Transverse colon (tissue), 4 donors: ENCODE measurements at regions of chr6 and their contacts with region 1.

Region 1: DNA sequence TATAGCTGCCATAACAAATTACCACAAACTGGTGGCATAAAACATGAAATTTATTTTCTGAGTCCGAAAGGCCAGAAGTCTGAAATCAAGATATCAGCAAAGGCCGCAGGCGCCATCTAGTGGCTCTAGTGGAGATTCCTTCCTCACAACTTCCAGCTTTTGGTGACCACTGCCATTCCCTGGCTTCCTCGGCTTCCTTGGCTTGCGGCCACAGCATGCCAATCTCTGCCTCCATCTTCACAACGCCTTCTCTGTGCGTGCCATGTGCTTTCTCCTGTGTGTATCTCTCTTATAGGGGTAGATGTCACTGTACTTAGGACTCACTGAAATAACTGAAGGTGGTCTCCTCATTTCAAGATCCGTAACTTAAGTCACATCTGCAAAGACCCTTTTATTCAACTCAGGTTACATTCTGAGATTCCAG is 5.4 kb upstream of the PLAGL1 start:
- DNase-seq: peak; percentile 83
- H3K4me3 ChIP-seq: no peak overlapping the region
- H3K27ac ChIP-seq: no peak overlapping the region
- H3K4me1 ChIP-seq: peaks cover 0 to 11% (median 5%) of the 10 kb centered on the region in 4 donors
- H3K27me3 ChIP-seq: no peaks in the 10 kb centered on the region
- CTCF ChIP-seq: peak; percentile 89 to 97 (median 90)
- EP300 ChIP-seq: no peak
- POLR2A ChIP-seq: no peak

Region 2: DNA sequence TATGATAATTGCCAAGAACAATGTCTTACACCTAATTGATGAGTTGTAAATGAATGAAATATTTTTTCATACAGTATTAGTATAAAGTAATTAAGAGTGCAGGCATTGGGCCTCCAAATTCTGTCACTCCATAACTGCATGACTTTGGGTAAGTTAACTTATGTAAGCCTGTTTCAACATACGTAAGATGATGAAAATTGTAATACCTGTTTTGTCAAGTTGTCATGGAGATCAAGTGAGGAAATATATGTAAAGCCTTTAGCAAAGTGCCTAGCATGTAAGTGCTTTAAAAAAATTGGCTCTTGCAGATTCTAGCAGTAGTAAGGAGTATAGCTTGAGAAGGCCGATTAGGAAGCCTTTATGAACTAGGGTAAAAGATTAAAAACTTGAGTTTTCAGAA is 1836.3 kb before region 1 on chr6:
- in situ Hi-C with region 1: no loop called
- intact Hi-C with region 1: no loop called
- DNase-seq: no peak
- H3K4me3 ChIP-seq: no peak overlapping the region
- H3K27ac ChIP-seq: no peak overlapping the region
- H3K4me1 ChIP-seq: no peaks in the 10 kb centered on the region
- H3K27me3 ChIP-seq: no peaks in the 10 kb centered on the region
- CTCF ChIP-seq: no peak
- EP300 ChIP-seq: no peak
- POLR2A ChIP-seq: no peak

Region 3: GRCh38 chr6:143867236-143867635 is 146.3 kb before region 1 on chr6:
- in situ Hi-C with region 1: no loop called
- intact Hi-C with region 1: loop called (anchors 10 kb)
- DNase-seq: no peak
- H3K4me3 ChIP-seq: no peak overlapping the region
- H3K27ac ChIP-seq: no peak overlapping the region
- H3K4me1 ChIP-seq: no peaks in the 10 kb centered on the region
- H3K27me3 ChIP-seq: no peaks in the 10 kb centered on the region
- CTCF ChIP-seq: no peak
- EP300 ChIP-seq: no peak
- POLR2A ChIP-seq: no peak

Region 4: DNA sequence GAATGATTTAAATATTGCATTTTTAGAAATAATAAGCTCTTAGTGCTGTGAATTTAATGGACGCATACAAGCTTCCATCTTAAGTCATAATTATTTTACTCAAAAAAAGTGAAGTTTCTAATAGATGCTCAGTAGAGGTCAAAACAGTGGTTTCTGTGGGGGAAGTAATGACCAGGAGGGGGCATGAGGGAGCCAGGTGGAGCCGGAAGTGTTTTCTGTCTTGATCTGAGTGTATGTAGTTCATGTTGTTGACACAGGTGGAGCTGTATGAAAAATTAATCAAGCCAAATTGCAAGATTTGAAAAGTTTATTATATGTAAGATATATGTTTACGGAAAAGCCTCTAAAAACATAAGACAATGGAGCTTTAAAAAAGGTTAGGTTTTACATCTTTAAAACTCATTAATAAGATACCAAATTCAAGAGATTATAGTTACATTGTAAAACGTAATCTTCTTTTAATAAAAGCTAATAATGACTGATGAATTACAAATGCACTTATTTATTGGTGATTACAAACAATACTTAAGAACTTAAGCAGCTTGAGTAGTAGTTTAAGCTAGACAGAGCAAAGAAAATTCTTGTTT is 73.4 kb before region 1 on chr6:
- in situ Hi-C with region 1: loop called in 3 of 4 experiments (anchors 10 kb)
- intact Hi-C with region 1: loop called (anchors 10 kb)
- DNase-seq: peak; percentile 62
- H3K4me3 ChIP-seq: no peak overlapping the region
- H3K27ac ChIP-seq: no peak overlapping the region
- H3K4me1 ChIP-seq: peaks cover 0 to 9% (median 0%) of the 10 kb centered on the region in 4 donors
- H3K27me3 ChIP-seq: no peaks in the 10 kb centered on the region
- CTCF ChIP-seq: peak; percentile 58 to 91 (median 81)
- EP300 ChIP-seq: no peak
- POLR2A ChIP-seq: no peak

Region 5: GRCh38 chr6:144027932-144028587 is 14.6 kb after region 1 on chr6:
- in situ Hi-C with region 1: no loop called
- intact Hi-C with region 1: no loop called
- DNase-seq: no peak
- H3K4me3 ChIP-seq: no peak overlapping the region
- H3K27ac ChIP-seq: no peak overlapping the region
- H3K4me1 ChIP-seq: peaks cover 0 to 20% (median 9%) of the 10 kb centered on the region in 4 donors
- H3K27me3 ChIP-seq: no peaks in the 10 kb centered on the region
- CTCF ChIP-seq: no peak
- EP300 ChIP-seq: no peak
- POLR2A ChIP-seq: no peak